SK-N-SH (cell line): ENCODE measurements at regions of chr1 and their contacts with region 1.

Region 1: DNA sequence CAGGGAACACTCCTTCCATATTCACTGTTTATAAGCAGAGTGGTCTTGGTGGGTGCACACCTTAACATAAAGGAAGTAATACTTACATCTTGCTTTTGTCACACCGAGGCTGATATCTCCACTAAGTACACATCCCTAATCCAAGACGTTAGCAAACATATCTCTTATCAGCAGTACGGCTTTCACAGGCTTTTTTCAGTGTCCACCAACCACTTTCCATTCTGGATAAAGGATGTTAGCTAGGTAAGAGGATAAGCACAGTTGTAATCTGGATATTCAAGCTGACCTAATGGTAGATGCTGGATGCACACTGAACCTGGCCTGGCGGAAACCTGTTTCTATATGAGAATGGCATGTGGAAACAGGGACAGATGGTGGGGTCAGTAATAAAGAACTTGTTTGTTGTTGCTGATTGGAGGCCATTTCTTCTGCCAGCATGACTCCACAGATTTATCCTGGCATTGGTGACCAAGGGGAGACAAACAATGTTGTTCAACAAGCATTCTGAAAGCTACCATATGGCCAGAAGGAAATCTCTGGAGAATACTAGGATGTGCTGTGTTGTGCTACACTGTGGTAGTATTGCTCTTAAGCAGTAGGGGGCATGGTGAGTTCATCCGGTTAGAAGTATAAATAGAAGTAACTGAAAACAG is 416.4 kb downstream of the PTBP2 start:
- DNase-seq: peak; percentile 35
- H3K4me3 ChIP-seq: no peak overlapping the region
- H3K27ac ChIP-seq: peak overlapping the region; percentile 12 to 77; a peak in 3 of 4 replicates
- H3K4me1 ChIP-seq: peaks cover 8% of the 10 kb centered on the region in 2 experiments; a peak in 3 of 4 replicates
- H3K27me3 ChIP-seq: no peaks in the 10 kb centered on the region
- CTCF ChIP-seq: peak; percentile 74
- EP300 ChIP-seq: no peak
- RAD21 ChIP-seq: peak; percentile 84

Region 2: GRCh38 chr1:97123717-97124431 is 14.1 kb before region 1 on chr1:
- CTCF ChIA-PET with region 1: interaction called, 25 read pairs
- POLR2A ChIA-PET with region 1: no interaction called
- DNase-seq: peak; percentile 41
- H3K4me3 ChIP-seq: no peak overlapping the region
- H3K27ac ChIP-seq: peak overlapping the region; percentile 24 to 100
- H3K4me1 ChIP-seq: peaks cover 9 to 23% of the 10 kb centered on the region in 2 experiments; a peak in 3 of 4 replicates
- H3K27me3 ChIP-seq: no peaks in the 10 kb centered on the region
- CTCF ChIP-seq: no peak
- EP300 ChIP-seq: peak in 1 of 2 experiments; percentile 86; a peak in 2 of 4 replicates
- RAD21 ChIP-seq: peak; percentile 38; the same call in 1 of the 2 replicates

Region 3: DNA sequence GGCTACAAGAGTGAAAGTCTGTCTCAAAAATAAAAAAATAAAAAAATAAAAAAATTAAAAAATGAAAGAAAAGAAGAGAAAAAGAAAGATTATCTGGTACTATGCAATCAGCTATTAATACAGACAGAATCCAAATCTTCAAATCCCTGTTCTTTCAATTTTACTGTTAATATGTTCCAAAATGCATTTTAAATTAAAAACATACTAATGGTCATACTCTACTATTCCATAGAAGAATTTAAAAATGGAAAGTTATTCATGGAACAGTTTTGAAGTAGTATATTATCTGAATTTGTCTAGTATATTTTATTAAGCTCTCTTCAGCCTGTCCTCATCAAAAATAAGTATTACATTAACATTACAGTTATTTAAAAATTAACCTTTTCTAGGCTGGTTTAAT is 13.7 kb after region 1 on chr1:
- CTCF ChIA-PET with region 1: interaction called, 38 read pairs
- POLR2A ChIA-PET with region 1: no interaction called
- DNase-seq: no peak
- H3K4me3 ChIP-seq: no peak overlapping the region
- H3K27ac ChIP-seq: no peak overlapping the region
- H3K4me1 ChIP-seq: peaks cover 0 to 2% of the 10 kb centered on the region in 2 experiments; a peak in 2 of 4 replicates
- H3K27me3 ChIP-seq: no peaks in the 10 kb centered on the region
- CTCF ChIP-seq: no peak
- EP300 ChIP-seq: no peak
- RAD21 ChIP-seq: no peak

Region 4: GRCh38 chr1:97308131-97308530 is 170.1 kb after region 1 on chr1:
- CTCF ChIA-PET with region 1: no interaction called
- POLR2A ChIA-PET with region 1: no interaction called
- DNase-seq: no peak
- H3K4me3 ChIP-seq: no peak overlapping the region
- H3K27ac ChIP-seq: no peak overlapping the region
- H3K4me1 ChIP-seq: no peaks in the 10 kb centered on the region; a peak in 2 of 4 replicates
- H3K27me3 ChIP-seq: no peaks in the 10 kb centered on the region
- CTCF ChIP-seq: no peak
- EP300 ChIP-seq: no peak
- RAD21 ChIP-seq: no peak

Region 5: GRCh38 chr1:97545446-97545845 is 407.5 kb after region 1 on chr1:
- CTCF ChIA-PET with region 1: no interaction called
- POLR2A ChIA-PET with region 1: no interaction called
- DNase-seq: no peak
- H3K4me3 ChIP-seq: no peak overlapping the region
- H3K27ac ChIP-seq: no peak overlapping the region
- H3K4me1 ChIP-seq: no peaks in the 10 kb centered on the region
- H3K27me3 ChIP-seq: no peaks in the 10 kb centered on the region
- CTCF ChIP-seq: no peak
- EP300 ChIP-seq: no peak
- RAD21 ChIP-seq: no peak